WTC11 (cell line): ENCODE measurements at regions of chr1 and their contacts with region 1.

Region 1: GRCh38 chr1:46603858-46604549 is at the start of gene MKNK1:
- DNase-seq: peak; percentile 100
- ATAC-seq: peak; percentile 93
- H3K4me3 Mint-ChIP-seq: peak within 1 kb of the TSS; percentile 89
- H3K27ac Mint-ChIP-seq: peak within 1 kb of the TSS; percentile 79
- H3K4me1 Mint-ChIP-seq: peaks cover 21% of the 10 kb centered on the region
- H3K27me3 Mint-ChIP-seq: no peaks in the 10 kb centered on the region
- CTCF ChIP-seq: no peak
- total RNA-seq, gene MKNK1: 17.5 to 18.6 TPM (median 18.0 TPM) in 3 replicates

Region 2: DNA sequence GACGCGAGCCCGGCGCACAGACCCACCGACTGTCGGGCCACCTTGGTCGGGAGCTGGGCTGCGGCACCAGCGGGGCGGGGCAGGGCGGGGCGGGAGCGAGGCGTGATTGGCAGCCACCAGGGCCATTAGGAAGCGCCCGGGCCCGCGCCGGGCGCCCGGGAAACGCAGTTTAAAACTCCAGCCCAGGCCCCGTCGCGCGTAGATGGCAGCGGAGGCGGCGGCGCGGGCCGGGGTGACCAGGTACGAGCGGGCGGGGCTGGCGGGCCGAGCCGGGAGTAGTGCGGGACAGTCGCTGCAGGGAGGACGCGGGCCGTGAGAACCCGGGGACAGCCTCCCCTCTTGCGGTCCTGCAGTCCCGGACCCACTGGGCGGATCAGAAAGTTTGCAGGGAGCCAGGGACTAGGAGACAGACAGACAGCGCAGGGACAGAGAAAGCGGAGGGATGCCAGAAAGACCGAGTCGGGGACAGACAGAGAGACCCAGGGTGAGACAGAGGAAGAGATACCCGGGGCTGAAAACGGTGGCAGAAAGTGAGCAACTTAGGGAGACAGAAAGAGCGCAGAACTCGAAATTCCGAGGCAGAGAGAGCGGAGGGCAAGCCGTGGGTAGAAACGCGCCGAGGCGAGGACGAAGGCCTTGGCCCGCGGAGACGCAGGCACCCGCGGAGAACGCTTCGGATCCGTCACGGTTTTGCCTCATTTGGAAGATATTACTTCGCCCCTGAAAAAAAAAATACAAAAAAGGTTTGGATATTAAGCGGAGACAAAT is 114.2 kb before region 1 on chr1 and contains the start of gene DMBX1:
- CTCF ChIA-PET with region 1: interaction called, 21 read pairs
- POLR2A ChIA-PET with region 1: no interaction called
- DNase-seq: peak; percentile 82
- ATAC-seq: peak; percentile 62
- H3K4me3 Mint-ChIP-seq: peak within 1 kb of the TSS; percentile 89
- H3K27ac Mint-ChIP-seq: no peak within 1 kb of the TSS
- H3K4me1 Mint-ChIP-seq: peaks cover 60% of the 10 kb centered on the region
- H3K27me3 Mint-ChIP-seq: peaks cover 99% of the 10 kb centered on the region
- CTCF ChIP-seq: no peak
- total RNA-seq, gene DMBX1: 1.7 to 3.7 TPM (median 1.8 TPM) in 3 replicates

Region 3: DNA sequence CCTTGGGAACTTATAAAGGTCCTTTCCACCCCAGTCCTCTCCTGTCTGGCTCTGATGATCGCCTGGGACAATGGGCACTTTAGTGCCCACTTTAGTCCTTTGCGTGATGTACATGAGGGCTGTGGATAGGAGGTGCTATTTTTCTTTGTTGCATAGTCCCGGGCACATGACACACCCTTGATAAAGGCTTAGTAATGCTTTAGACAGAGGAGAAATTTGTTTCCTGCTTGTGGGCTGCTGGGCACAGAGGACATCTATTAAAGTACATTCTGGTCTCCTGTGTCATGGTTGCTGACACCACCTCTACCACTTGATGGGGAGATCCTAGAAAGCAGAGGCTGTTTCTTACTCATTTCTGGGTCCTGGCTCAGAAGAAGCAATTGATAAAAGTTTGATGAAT is 47.2 kb before region 1 on chr1:
- CTCF ChIA-PET with region 1: interaction called, 20 read pairs
- POLR2A ChIA-PET with region 1: interaction called, 3 read pairs
- DNase-seq: no peak
- ATAC-seq: no peak
- H3K4me3 Mint-ChIP-seq: no peak overlapping the region
- H3K27ac Mint-ChIP-seq: no peak overlapping the region
- H3K4me1 Mint-ChIP-seq: peaks cover 23% of the 10 kb centered on the region
- H3K27me3 Mint-ChIP-seq: no peaks in the 10 kb centered on the region
- CTCF ChIP-seq: no peak

Region 4: GRCh38 chr1:46616277-46617107 is 12.5 kb after region 1 on chr1 and contains the start of gene MOB3C:
- CTCF ChIA-PET with region 1: interaction called, 33 read pairs
- POLR2A ChIA-PET with region 1: interaction called, 14 read pairs
- DNase-seq: peak; percentile 61
- ATAC-seq: peak; percentile 14
- H3K4me3 Mint-ChIP-seq: peak within 1 kb of the TSS; percentile 86
- H3K27ac Mint-ChIP-seq: no peak within 1 kb of the TSS
- H3K4me1 Mint-ChIP-seq: peaks cover 52% of the 10 kb centered on the region
- H3K27me3 Mint-ChIP-seq: peaks cover 30% of the 10 kb centered on the region
- CTCF ChIP-seq: no peak
- total RNA-seq, gene MOB3C: 3.1 to 4.0 TPM (median 3.4 TPM) in 3 replicates

Region 5: DNA sequence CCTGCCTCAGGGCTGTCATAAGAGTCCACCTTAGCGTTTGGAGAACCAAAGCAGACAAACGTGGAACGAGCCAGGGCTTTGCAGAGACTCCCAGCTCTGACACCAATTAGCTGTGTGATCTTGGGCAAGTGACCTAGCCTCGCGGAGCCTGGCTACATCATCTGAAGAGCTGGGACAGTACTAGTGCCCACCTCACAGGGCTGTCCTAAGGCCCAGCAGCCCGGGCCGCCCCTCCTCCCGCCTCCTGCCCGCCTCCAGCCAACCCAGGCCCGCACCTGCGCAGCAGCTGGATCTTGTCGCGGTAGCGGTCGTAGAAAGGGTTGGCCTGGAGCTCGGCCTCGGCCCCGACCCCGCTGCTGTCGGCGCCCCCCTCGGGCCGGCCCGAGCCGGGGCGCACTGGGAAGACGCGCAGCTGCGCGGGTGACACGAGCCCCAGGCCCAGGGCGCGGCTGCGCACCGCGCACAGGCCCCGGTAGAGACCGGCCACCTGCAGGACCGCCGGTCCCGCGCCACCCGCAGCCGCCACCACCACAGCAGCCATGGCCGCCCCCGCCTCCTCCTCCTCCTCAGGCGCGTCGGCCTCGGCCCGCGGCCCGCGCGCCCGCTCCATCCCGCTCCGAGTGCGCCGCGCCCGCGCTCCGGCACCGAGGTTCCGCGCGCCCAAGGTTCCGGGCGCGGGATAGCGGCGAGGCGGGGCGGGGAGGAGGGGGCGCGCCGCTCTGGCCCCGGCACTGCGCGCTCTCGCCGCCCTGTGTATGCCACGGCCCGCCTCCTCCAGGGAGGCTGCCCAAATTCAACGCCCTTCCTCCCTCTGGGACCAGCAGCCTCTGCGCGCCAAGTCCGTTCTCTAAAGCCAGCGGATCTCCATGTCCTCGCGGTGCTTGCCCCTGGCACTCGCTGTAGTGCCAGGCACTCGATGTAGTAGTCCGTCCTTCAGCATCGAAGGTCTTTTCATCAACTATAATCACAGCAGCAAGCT is 64.1 kb after region 1 on chr1 and contains the start of gene ATPAF1:
- CTCF ChIA-PET with region 1: interaction called, 15 read pairs
- POLR2A ChIA-PET with region 1: no interaction called
- DNase-seq: peak; percentile 77
- ATAC-seq: peak; percentile 92
- H3K4me3 Mint-ChIP-seq: peak within 1 kb of the TSS; percentile 80
- H3K27ac Mint-ChIP-seq: no peak within 1 kb of the TSS; the same call in 1 of the 2 replicates
- H3K4me1 Mint-ChIP-seq: peaks cover 19% of the 10 kb centered on the region
- H3K27me3 Mint-ChIP-seq: no peaks in the 10 kb centered on the region; the same call in 1 of the 2 replicates
- CTCF ChIP-seq: no peak
- total RNA-seq, gene ATPAF1: 35.7 to 45.5 TPM (median 44.5 TPM) in 3 replicates